ENCODE measurements at regions of chr19 and their contacts with region 1.

Region 1: DNA sequence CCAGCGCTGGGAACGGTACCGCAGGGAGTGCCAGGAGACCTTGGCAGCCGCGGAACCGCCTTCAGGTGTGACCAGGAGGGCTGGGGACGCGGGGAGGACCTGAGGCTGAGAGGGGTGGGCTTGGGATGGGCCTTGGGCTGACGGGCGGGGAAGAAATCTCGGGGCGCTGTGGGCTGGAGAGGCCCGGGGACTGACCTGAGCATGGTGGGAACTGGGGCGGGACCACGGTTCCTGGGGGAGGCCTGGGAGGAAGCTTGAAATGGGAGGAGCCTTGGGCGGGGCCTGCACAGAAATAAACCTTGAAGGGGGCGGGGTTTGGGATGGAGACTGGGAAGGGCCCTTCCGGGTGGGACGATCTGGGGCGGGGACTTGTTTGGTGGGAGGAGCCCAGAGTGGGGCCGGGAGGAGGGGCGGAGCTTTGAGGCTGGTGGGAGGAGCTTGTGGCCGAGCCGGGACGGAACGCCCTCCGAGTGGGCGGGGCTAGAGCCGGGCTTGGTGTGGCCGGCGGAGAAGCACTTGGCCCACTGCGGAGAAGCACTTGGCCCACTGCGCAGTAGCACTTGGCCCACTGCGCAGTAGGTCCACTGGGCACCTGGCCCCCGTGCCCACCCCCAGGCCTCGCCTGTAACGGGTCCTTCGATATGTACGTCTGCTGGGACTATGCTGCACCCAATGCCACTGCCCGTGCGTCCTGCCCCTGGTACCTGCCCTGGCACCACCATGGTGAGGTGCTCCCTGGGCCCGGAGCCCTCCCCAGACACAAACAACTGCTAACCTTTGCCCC is 2.8 kb downstream of the GIPR start:
- DNase-seq: peak; percentile 81
- ATAC-seq: peak; percentile 40
- H3K4me3 Mint-ChIP-seq: peak overlapping the region; percentile 59
- H3K27ac Mint-ChIP-seq: no peak overlapping the region
- H3K4me1 Mint-ChIP-seq: peaks cover 36% of the 10 kb centered on the region
- H3K27me3 Mint-ChIP-seq: peaks cover 2% of the 10 kb centered on the region

Region 2: DNA sequence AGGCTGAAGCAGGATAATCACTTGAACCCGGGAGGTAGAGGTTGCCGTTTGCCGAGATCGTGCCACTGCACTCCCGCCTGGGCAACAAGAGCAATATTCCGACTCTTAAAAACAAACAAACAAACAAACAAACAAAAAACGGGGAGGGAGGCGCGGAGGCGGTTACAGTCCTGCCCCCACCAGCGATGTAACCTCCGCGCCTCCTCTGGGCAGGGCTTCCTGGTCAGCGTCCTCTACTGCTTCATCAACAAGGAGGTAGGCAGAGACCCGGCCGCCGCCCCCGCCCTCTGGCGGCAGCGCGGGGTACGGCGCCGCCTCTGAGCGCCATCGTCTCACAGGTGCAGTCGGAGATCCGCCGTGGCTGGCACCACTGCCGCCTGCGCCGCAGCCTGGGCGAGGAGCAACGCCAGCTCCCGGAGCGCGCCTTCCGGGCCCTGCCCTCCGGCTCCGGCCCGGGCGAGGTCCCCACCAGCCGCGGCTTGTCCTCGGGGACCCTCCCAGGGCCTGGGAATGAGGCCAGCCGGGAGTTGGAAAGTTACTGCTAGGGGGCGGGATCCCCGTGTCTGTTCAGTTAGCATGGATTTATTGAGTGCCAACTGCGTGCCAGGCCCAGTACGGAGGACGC is 10.6 kb after region 1 on chr19:
- CTCF ChIA-PET with region 1: interaction called, 15 read pairs
- POLR2A ChIA-PET with region 1: interaction called, 6 read pairs
- DNase-seq: peak; percentile 91
- ATAC-seq: peak; percentile 95
- H3K4me3 Mint-ChIP-seq: peak overlapping the region; percentile 64
- H3K27ac Mint-ChIP-seq: peak overlapping the region; percentile 64
- H3K4me1 Mint-ChIP-seq: peaks cover 26% of the 10 kb centered on the region
- H3K27me3 Mint-ChIP-seq: no peaks in the 10 kb centered on the region

Region 3: DNA sequence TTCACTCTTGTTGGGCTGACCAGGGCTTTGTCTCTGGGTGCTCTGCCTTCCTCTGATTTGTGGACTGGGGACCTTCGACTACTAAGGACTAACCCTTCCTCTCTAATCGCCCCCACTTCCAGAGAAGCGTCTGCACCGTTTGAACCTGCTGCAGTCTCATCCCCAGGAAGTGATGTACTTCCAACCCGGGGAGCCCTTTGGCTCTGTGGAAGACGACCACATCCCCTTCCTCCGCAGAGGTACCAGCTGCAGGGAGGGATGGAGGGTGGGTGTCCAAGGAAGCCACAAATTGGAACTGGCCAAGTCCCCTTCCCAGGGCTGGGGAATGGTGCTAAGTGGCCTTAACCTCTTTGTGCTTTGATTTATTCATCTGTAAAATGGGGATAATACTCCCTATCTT is 30.8 kb after region 1 on chr19:
- CTCF ChIA-PET with region 1: no interaction called
- POLR2A ChIA-PET with region 1: no interaction called
- DNase-seq: no peak
- ATAC-seq: no peak
- H3K4me3 Mint-ChIP-seq: no peak overlapping the region
- H3K27ac Mint-ChIP-seq: no peak overlapping the region
- H3K4me1 Mint-ChIP-seq: peaks cover 7% of the 10 kb centered on the region
- H3K27me3 Mint-ChIP-seq: no peaks in the 10 kb centered on the region

Measured in activated CD8-positive, alpha-beta T cell treated with anti-CD3 and anti-CD28 coated beads, Interleukin-2, amount 10 ng/mL, durations not matched to agents 7 days and 5 days (primary cell).